Caco-2 (cell line): ENCODE measurements at regions of chr2 and their contacts with region 1.

Region 1: GRCh38 chr2:165634855-165635254 is 159.2 kb downstream of the GALNT3 start:
- DNase-seq: peak; percentile 46 to 55
- H3K4me3 ChIP-seq: no peak overlapping the region
- H3K4me3 Mint-ChIP-seq: no peak overlapping the region
- H3K27ac Mint-ChIP-seq: peak overlapping the region; percentile 11
- H3K4me1 ChIP-seq: peaks cover 10% of the 10 kb centered on the region
- H3K4me1 Mint-ChIP-seq: peaks cover 13% of the 10 kb centered on the region
- H3K27me3 ChIP-seq: no peaks in the 10 kb centered on the region
- H3K27me3 Mint-ChIP-seq: no peaks in the 10 kb centered on the region
- CTCF ChIP-seq: no peak

Region 2: DNA sequence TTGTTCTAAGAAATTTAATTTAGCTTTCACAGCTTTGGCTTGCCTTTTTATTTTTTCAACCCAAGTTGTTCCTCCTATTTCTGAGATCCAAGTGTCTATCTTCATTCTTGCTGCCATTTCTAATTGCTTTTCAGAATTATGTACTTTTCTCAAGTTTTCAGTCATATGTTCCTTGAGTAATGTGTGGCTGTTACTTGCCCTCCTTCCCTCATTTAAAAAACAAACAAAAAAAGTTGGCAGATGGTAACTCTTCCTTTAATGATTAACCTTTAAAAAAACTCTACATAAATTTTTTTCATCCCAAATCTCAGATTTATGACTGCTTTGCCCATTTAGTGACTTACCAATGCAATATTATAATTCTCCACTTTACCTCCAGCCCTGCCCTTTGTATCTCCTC is 27.9 kb after region 1 on chr2:
- CTCF ChIA-PET with region 1: no interaction called
- POLR2A ChIA-PET with region 1: interaction called, 3 read pairs
- intact Hi-C with region 1: loop called (anchors 2 kb)
- DNase-seq: peak in 1 of 2 experiments; percentile 16
- H3K4me3 ChIP-seq: no peak overlapping the region
- H3K4me3 Mint-ChIP-seq: no peak overlapping the region
- H3K27ac Mint-ChIP-seq: peak overlapping the region; percentile 65
- H3K4me1 ChIP-seq: peaks cover 18% of the 10 kb centered on the region
- H3K4me1 Mint-ChIP-seq: peaks cover 11% of the 10 kb centered on the region
- H3K27me3 ChIP-seq: no peaks in the 10 kb centered on the region
- H3K27me3 Mint-ChIP-seq: peaks cover 6% of the 10 kb centered on the region
- CTCF ChIP-seq: no peak